CD8-positive, alpha-beta T cell (primary cell): ENCODE measurements at regions of chr1 and their contacts with region 1.

Region 1: GRCh38 chr1:67760030-67760821 is 73.0 kb downstream of the GNG12 start:
- DNase-seq: peak; percentile 17 to 72 (median 59)
- ATAC-seq: peak; percentile 56
- H3K4me3 ChIP-seq: no peak overlapping the region
- H3K4me3 Mint-ChIP-seq: no peak overlapping the region
- H3K27ac ChIP-seq: no peak overlapping the region
- H3K27ac Mint-ChIP-seq: no peak overlapping the region
- H3K4me1 ChIP-seq: no peaks in the 10 kb centered on the region
- H3K4me1 Mint-ChIP-seq: no peaks in the 10 kb centered on the region
- H3K27me3 ChIP-seq: peaks cover 0 to 3% of the 10 kb centered on the region in 2 experiments
- H3K27me3 Mint-ChIP-seq: peaks cover 19% of the 10 kb centered on the region
- CTCF ChIP-seq: peak; percentile 95

Region 2: DNA sequence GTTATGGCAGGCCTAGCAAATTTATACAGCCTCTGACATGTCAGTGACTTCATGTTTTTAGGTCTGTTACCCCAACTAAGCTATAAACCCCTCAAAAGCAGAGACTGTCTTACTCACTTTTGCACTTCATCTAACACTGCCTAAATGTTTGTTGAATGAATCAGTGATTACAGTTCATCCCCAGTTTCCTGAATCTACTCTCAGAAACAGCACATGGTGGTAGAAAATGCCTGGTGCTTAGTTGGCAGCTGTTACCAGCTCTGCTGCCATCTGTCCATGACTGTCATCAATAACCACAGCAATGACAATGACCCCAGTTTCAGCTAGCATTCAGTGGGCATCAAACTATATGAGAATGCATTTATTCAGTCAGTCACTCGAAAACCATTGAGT is 219.5 kb before region 1 on chr1:
- CTCF ChIA-PET with region 1: interaction called, 101 read pairs
- POLR2A ChIA-PET with region 1: no interaction called
- intact Hi-C with region 1: no loop called
- DNase-seq: no peak
- ATAC-seq: no peak
- H3K4me3 ChIP-seq: no peak overlapping the region
- H3K4me3 Mint-ChIP-seq: no peak overlapping the region
- H3K27ac ChIP-seq: no peak overlapping the region
- H3K27ac Mint-ChIP-seq: no peak overlapping the region
- H3K4me1 ChIP-seq: no peaks in the 10 kb centered on the region
- H3K4me1 Mint-ChIP-seq: no peaks in the 10 kb centered on the region
- H3K27me3 ChIP-seq: no peaks in the 10 kb centered on the region
- H3K27me3 Mint-ChIP-seq: no peaks in the 10 kb centered on the region
- CTCF ChIP-seq: no peak

Region 3: GRCh38 chr1:67582625-67583461 is 177.4 kb before region 1 on chr1:
- CTCF ChIA-PET with region 1: interaction called, 15 read pairs
- POLR2A ChIA-PET with region 1: no interaction called
- intact Hi-C with region 1: no loop called
- DNase-seq: no peak
- ATAC-seq: no peak
- H3K4me3 ChIP-seq: no peak overlapping the region
- H3K4me3 Mint-ChIP-seq: no peak overlapping the region
- H3K27ac ChIP-seq: no peak overlapping the region
- H3K27ac Mint-ChIP-seq: no peak overlapping the region
- H3K4me1 ChIP-seq: no peaks in the 10 kb centered on the region
- H3K4me1 Mint-ChIP-seq: peaks cover 2% of the 10 kb centered on the region
- H3K27me3 ChIP-seq: no peaks in the 10 kb centered on the region
- H3K27me3 Mint-ChIP-seq: no peaks in the 10 kb centered on the region
- CTCF ChIP-seq: no peak

Region 4: GRCh38 chr1:67735806-67736627 is 24.2 kb before region 1 on chr1:
- CTCF ChIA-PET with region 1: interaction called, 20 read pairs
- POLR2A ChIA-PET with region 1: no interaction called
- intact Hi-C with region 1: no loop called
- DNase-seq: peak in 7 of 9 experiments; percentile 11 to 71 (median 28)
- ATAC-seq: peak; percentile 81
- H3K4me3 ChIP-seq: peak overlapping the region; percentile 8 to 22
- H3K4me3 Mint-ChIP-seq: peak overlapping the region; percentile 72
- H3K27ac ChIP-seq: peak overlapping the region in 1 of 2 experiments; percentile 52
- H3K27ac Mint-ChIP-seq: peak overlapping the region; percentile 88
- H3K4me1 ChIP-seq: peaks cover 15% of the 10 kb centered on the region
- H3K4me1 Mint-ChIP-seq: peaks cover 19% of the 10 kb centered on the region
- H3K27me3 ChIP-seq: no peaks in the 10 kb centered on the region
- H3K27me3 Mint-ChIP-seq: peaks cover 4% of the 10 kb centered on the region
- CTCF ChIP-seq: no peak

Region 5: GRCh38 chr1:68173911-68174737 is 413.9 kb after region 1 on chr1:
- CTCF ChIA-PET with region 1: no interaction called
- POLR2A ChIA-PET with region 1: no interaction called
- intact Hi-C with region 1: no loop called
- DNase-seq: no peak
- ATAC-seq: no peak
- H3K4me3 ChIP-seq: no peak overlapping the region
- H3K4me3 Mint-ChIP-seq: no peak overlapping the region
- H3K27ac ChIP-seq: no peak overlapping the region
- H3K27ac Mint-ChIP-seq: no peak overlapping the region
- H3K4me1 ChIP-seq: no peaks in the 10 kb centered on the region
- H3K4me1 Mint-ChIP-seq: no peaks in the 10 kb centered on the region
- H3K27me3 ChIP-seq: no peaks in the 10 kb centered on the region
- H3K27me3 Mint-ChIP-seq: no peaks in the 10 kb centered on the region
- CTCF ChIP-seq: no peak

Region 6: GRCh38 chr1:68346188-68346808 is 586.1 kb after region 1 on chr1:
- CTCF ChIA-PET with region 1: no interaction called
- POLR2A ChIA-PET with region 1: no interaction called
- intact Hi-C with region 1: loop called in 1 of 2 experiments (anchors 10 kb)
- DNase-seq: peak in 1 of 9 experiments; percentile 2
- ATAC-seq: no peak
- H3K4me3 ChIP-seq: no peak overlapping the region
- H3K4me3 Mint-ChIP-seq: no peak overlapping the region
- H3K27ac ChIP-seq: no peak overlapping the region
- H3K27ac Mint-ChIP-seq: no peak overlapping the region
- H3K4me1 ChIP-seq: no peaks in the 10 kb centered on the region
- H3K4me1 Mint-ChIP-seq: no peaks in the 10 kb centered on the region
- H3K27me3 ChIP-seq: no peaks in the 10 kb centered on the region
- H3K27me3 Mint-ChIP-seq: no peaks in the 10 kb centered on the region
- CTCF ChIP-seq: no peak